Activated CD4-positive, alpha-beta memory T cell treated with anti-CD3 and anti-CD28 coated beads, Interleukin-2, amount 10 ng/mL, durations not matched to agents 7 days and 5 days (primary cell): ENCODE measurements at regions of chr14 and their contacts with region 1.

Region 1: GRCh38 chr14:92121670-92122350 is at the starts of genes CPSF2 and NDUFB1:
- DNase-seq: peak; percentile 86
- H3K4me3 Mint-ChIP-seq: peak within 1 kb of the TSS; percentile 85
- H3K27ac Mint-ChIP-seq: peak within 1 kb of the TSS; percentile 97
- H3K4me1 Mint-ChIP-seq: peaks cover 50% of the 10 kb centered on the region
- H3K27me3 Mint-ChIP-seq: no peaks in the 10 kb centered on the region
- total RNA-seq, gene CPSF2: 74.5 to 79.3 TPM
- total RNA-seq, gene NDUFB1: 136 to 140 TPM

Region 2: DNA sequence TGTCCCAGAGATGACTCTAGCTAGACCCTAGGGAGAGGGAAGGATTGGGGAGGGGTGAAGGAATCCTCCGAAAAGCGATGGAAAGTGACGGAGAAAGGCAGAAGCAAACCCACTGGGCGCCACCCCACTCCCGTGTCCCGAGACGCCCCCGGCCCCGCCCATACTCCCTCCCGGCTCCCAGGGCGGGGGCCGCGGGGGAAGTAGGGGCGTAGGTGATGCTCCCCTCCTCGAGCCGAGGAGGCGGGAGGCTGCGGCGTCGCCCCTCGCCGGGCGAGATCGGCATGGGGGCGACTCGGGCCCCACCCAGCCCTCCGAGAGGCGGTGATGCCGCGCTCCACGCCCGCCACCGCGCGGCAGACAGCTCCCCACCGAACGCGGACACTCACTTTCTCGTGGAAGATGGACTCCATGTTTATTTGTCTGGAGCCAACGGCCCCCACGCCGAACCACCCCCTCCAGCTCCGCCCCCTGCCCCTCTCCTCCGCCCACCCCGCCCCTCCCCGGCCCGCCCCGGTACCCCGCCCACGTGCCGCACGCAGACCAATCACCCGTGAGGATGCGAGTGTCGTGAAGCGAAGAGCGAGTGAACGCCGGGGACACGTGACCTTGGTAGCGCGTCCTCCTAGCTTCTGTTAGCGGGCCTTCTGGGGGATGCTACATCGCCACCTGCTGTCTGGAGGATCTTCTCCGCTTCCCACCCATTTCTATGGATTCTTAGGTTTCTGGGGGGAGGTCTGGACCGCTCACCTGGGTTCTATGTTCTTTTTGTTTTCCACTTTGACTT is 15.5 kb before region 1 on chr14 and contains the start of gene ATXN3:
- CTCF ChIA-PET with region 1: interaction called, 141 read pairs
- POLR2A ChIA-PET with region 1: interaction called, 149 read pairs
- DNase-seq: peak; percentile 96
- H3K4me3 Mint-ChIP-seq: peak within 1 kb of the TSS; percentile 93
- H3K27ac Mint-ChIP-seq: peak within 1 kb of the TSS; percentile 92
- H3K4me1 Mint-ChIP-seq: peaks cover 38% of the 10 kb centered on the region
- H3K27me3 Mint-ChIP-seq: no peaks in the 10 kb centered on the region
- total RNA-seq, gene ATXN3: 29.3 to 30.5 TPM

Region 3: GRCh38 chr14:92135267-92135666 is 13.5 kb after region 1 on chr14:
- CTCF ChIA-PET with region 1: interaction called, 8 read pairs
- POLR2A ChIA-PET with region 1: interaction called, 30 read pairs
- DNase-seq: no peak
- H3K4me3 Mint-ChIP-seq: no peak overlapping the region
- H3K27ac Mint-ChIP-seq: no peak overlapping the region
- H3K4me1 Mint-ChIP-seq: no peaks in the 10 kb centered on the region
- H3K27me3 Mint-ChIP-seq: no peaks in the 10 kb centered on the region

Region 4: GRCh38 chr14:92154283-92154942 is 32.6 kb after region 1 on chr14:
- CTCF ChIA-PET with region 1: no interaction called
- POLR2A ChIA-PET with region 1: no interaction called
- DNase-seq: no peak
- H3K4me3 Mint-ChIP-seq: no peak overlapping the region
- H3K27ac Mint-ChIP-seq: no peak overlapping the region
- H3K4me1 Mint-ChIP-seq: peaks cover 10% of the 10 kb centered on the region
- H3K27me3 Mint-ChIP-seq: no peaks in the 10 kb centered on the region